Left ventricle myocardium superior (tissue), 1 donor: ENCODE measurements at regions of chr6 and their contacts with region 1.

Region 1: DNA sequence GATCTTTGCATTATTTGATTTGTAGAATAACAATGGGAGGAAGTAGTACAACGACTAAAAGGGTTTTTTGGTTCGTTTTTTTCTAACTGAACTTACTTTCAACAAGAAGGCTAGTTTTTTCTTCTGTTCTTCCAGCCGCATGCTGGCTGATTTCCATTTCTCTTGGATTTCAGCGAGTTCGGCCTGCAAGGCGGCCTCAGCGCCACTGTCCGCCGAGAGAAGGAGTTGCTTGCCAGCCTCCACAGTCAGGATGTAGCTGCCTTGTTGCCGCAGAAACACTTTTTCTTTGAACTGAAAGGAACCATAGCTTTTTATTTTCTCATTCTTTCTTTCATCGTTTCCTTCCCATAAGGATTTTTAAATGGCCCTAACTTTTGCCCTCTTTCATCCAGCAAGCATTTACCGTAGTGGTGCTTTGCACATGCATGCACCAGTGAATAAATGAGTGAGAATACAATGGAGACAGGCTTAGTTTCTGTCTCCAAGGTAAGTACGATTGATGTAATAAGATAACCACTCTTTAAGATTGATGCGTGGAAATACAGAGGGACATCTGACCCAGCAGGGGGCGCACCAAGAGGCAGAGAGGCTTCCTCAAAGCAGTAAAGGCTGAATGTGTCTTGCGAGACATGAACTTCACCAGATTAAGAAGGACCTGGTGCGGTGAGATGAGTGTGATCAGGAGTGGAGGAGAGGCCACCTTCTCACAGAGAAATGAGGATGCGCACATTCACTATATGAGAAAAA is 398.8 kb downstream of the ESR1 start:
- DNase-seq: peak; percentile 64
- ATAC-seq: peak; percentile 23

Region 2: GRCh38 chr6:151891524-151891923 is 314.7 kb before region 1 on chr6:
- intact Hi-C with region 1: no loop called
- DNase-seq: no peak
- ATAC-seq: no peak

Region 3: GRCh38 chr6:152151920-152152319 is 54.3 kb before region 1 on chr6:
- intact Hi-C with region 1: loop called (anchors 10 kb)
- DNase-seq: no peak
- ATAC-seq: no peak

Region 4: GRCh38 chr6:152534541-152534940 is 328.3 kb after region 1 on chr6:
- intact Hi-C with region 1: no loop called
- DNase-seq: no peak
- ATAC-seq: no peak